BJ (cell line): ENCODE measurements at regions of chr2 and their contacts with region 1.

Region 1: DNA sequence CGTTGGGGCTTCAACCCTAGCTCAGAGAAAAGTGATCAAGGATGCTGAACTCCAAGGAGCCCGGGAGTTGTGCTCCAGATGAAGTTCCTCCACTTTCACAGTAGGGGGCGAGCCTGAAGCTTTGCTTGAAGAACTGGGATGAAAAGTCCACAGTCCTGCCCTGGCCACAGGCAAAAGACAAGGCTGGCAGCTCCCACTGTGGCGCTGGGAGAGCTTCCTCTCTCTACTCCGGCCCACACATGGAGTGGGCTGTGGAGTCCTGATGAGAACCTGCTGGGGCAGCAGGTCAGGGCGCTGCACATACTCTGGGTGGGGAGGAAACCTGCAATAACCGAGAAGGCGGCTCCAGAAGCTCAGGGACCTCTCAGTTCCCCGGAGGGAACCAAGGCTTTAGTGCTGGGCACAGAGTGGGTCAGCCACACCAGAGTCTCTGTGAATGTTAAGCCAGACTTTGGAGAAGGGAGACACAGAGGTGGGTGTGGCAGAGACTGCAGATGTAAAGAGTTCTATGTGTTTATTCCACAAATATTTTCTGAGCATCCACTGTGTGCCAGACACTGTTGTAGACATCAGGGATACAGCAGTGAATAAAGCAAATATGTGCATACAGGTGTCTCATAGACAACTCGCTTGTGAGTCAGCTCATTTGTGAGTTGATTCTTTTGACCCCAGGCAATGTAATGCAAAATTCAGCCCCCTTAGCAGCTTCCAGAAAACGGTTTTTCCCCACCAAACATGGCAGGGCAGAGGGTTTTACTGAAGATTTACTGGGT is 48.0 kb upstream of the MRPL33 start:
- DNase-seq: no peak
- H3K4me3 ChIP-seq: no peak overlapping the region
- H3K27me3 ChIP-seq: no peaks in the 10 kb centered on the region
- CTCF ChIP-seq: peak; percentile 89

Region 2: DNA sequence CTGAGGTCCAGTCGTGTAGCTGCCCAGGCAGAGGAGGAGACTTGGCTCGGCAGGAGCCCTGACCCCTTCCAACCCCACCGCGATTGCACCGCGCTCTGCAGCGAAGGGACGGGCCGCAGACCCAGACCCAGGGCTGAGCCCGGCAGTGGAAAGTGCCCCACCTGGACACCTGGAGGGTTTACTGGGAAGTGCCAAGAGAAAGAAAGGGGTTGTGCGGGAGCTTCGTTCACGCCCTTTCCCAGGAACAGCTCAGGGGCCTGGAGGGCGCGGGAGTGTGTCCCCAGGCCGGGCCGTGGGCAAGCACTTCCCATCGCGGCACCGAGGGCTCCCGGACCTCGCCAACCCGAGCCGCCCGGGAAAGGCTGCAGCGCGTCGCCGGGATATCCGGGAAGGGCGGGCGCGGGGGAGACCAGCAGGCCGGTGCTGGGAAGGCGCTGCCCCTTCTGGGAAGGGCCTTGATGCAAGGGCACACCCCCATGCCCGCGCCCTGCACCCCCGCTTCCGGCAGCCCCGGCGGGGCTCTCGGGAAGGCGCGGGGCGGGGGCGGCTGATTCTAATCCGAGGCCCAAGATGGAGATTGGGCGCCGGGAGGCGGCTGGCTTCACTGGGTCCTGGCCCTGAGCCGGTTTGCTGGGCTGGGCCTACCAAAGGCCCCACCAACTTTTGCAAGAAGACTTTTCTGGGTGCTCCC is 11.8 kb after region 1 on chr2:
- CTCF ChIA-PET with region 1: interaction called, 16 read pairs
- POLR2A ChIA-PET with region 1: no interaction called
- DNase-seq: no peak
- H3K4me3 ChIP-seq: peak overlapping the region; percentile 38
- H3K27me3 ChIP-seq: no peaks in the 10 kb centered on the region
- CTCF ChIP-seq: no peak

Region 3: DNA sequence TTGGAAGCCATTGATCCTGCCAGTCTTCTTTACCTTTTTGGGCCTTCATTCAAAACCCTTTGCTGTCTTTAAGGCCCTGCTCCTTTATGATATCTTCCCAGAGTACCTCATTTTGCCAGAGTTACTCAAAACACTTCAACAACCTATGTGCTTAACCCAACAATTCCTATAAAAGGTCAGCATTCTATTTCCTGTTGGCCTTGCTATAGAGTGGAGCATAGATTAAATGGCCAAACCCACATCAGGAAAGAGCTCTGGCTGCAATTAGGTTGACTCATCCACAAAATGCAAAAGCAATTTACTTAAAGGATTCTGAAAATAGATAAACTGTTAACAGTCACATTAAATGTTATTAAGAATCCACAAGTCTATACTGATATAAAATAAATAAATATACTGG is 69.2 kb after region 1 on chr2:
- CTCF ChIA-PET with region 1: interaction called, 10 read pairs
- POLR2A ChIA-PET with region 1: no interaction called
- DNase-seq: no peak
- H3K4me3 ChIP-seq: no peak overlapping the region
- H3K27me3 ChIP-seq: no peaks in the 10 kb centered on the region
- CTCF ChIP-seq: no peak